GM12878 (cell line): ENCODE measurements at regions of chr6 and their contacts with region 1.

Region 1: GRCh38 chr6:137313928-137314855 is 95.0 kb upstream of the IFNGR1 start:
- DNase-seq: peak; percentile 43
- ATAC-seq: peak; percentile 97
- H3K4me3 ChIP-seq: no peak overlapping the region
- H3K27ac ChIP-seq: no peak overlapping the region
- H3K4me1 ChIP-seq: peaks cover 10% of the 10 kb centered on the region
- H3K27me3 ChIP-seq: no peaks in the 10 kb centered on the region
- CTCF ChIP-seq: peak; percentile 66 to 90 (median 79)
- EP300 ChIP-seq: no peak
- POLR2A ChIP-seq: no peak
- RAD21 ChIP-seq: peak; percentile 99

Region 2: DNA sequence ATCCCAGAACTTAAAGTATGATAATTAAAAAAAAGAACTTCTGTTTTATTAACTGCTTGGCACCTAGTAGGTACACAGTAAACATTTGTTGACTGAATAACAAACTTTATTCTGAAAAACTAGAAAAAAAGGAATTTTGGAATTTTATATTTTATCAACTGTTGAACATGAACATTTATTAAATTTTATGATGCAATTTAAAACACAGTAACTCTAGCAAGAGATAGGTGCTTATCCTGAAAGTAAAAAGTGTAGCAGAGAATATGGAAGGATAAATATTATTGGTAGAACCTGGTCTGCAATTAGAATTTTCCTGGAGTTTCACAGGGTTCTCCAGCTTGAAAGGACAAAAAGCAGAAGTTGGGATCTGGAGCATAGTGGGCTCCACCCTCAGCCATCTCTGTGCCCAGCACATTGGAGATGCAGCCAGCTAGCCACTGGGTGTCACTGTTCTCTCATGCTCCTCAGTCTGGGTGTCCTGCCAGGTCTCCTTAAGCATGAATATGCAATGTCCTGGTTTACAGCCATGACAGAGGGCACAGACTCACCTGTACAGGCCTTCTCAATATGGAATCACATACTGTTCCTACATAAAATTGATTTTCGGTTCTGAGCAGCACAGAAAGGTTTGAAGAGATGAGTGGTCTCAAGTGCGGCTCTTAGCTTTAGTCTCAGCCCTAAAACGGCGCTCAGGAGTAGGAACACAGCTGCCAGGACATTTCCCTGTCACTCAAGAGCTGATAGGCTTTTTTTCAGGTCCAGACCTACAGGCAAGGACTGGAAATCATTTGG is 237.7 kb before region 1 on chr6:
- CTCF ChIA-PET with region 1: interaction called, 53 read pairs
- POLR2A ChIA-PET with region 1: interaction called, 6 read pairs
- RAD21 ChIA-PET with region 1: interaction called, 39 read pairs
- SMC1A ChIA-PET with region 1: interaction called, 43 read pairs
- in situ Hi-C with region 1: no loop called
- intact Hi-C with region 1: loop called (anchors 1 kb)
- DNase-seq: no peak
- ATAC-seq: peak; percentile 100
- H3K4me3 ChIP-seq: no peak overlapping the region
- H3K27ac ChIP-seq: peak overlapping the region; percentile 42
- H3K4me1 ChIP-seq: peaks cover 7% of the 10 kb centered on the region
- H3K27me3 ChIP-seq: no peaks in the 10 kb centered on the region
- CTCF ChIP-seq: peak; percentile 90 to 96 (median 93); a peak in 5 of 6 replicates
- EP300 ChIP-seq: no peak
- POLR2A ChIP-seq: no peak
- RAD21 ChIP-seq: peak; percentile 96

Region 3: DNA sequence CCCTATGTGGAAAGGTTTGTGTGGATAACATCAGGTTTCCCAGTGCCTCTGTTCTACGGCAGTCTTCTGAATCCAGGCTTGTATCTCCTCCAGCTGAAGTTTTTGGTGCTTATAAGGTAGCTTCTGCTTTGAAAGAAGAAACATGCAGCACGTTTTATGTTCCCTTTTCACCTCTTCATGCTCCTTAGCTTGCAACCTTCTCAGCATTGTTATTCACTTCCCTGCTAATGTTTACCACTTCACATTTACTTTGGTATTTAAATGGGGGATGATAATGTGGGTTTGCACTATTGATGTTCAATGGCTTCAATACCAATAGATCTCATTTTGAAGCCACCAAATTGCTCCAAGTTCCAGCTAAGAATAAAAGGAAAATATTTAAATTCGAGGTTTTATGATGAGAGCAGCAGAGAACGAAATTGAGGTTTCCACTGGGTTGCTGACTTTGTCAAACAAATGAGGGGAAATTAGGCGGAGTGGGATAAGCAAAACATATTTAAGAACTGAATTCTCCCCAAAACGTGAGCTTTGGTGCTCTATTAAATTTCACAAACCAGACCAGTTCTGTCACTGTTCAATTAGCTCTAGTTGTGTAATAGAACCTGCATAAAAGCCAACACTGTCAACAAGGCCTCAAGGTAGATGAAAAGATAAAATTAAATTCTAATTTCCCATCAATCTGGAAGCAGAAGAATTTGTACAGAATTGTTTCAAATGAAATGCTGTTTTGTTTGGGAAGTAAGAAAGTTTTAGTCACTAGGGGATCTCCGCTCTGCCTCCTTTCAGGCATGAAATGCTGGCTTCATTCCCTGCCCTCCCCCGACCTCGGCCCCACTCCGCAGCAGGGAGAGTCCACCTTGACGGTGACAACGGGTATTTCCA is 142.1 kb before region 1 on chr6:
- CTCF ChIA-PET with region 1: interaction called, 22 read pairs
- POLR2A ChIA-PET with region 1: no interaction called
- RAD21 ChIA-PET with region 1: interaction called, 21 read pairs
- SMC1A ChIA-PET with region 1: interaction called, 18 read pairs
- in situ Hi-C with region 1: loop called (anchors 5 kb)
- intact Hi-C with region 1: loop called (anchors 5 kb)
- DNase-seq: peak; percentile 68
- ATAC-seq: peak; percentile 86
- H3K4me3 ChIP-seq: 0 out of 2 replicates have a peak overlapping the region, but pooled peaks have one; percentile 1
- H3K27ac ChIP-seq: peak overlapping the region; percentile 84
- H3K4me1 ChIP-seq: peaks cover 51% of the 10 kb centered on the region
- H3K27me3 ChIP-seq: no peaks in the 10 kb centered on the region
- CTCF ChIP-seq: no peak
- EP300 ChIP-seq: peak; percentile 51 to 64; a peak in 1 of 4 replicates
- POLR2A ChIP-seq: 0 out of 2 replicates have a peak, but pooled peaks have one; percentile 31
- RAD21 ChIP-seq: peak; percentile 18; the same call in 1 of the 2 replicates

Region 4: DNA sequence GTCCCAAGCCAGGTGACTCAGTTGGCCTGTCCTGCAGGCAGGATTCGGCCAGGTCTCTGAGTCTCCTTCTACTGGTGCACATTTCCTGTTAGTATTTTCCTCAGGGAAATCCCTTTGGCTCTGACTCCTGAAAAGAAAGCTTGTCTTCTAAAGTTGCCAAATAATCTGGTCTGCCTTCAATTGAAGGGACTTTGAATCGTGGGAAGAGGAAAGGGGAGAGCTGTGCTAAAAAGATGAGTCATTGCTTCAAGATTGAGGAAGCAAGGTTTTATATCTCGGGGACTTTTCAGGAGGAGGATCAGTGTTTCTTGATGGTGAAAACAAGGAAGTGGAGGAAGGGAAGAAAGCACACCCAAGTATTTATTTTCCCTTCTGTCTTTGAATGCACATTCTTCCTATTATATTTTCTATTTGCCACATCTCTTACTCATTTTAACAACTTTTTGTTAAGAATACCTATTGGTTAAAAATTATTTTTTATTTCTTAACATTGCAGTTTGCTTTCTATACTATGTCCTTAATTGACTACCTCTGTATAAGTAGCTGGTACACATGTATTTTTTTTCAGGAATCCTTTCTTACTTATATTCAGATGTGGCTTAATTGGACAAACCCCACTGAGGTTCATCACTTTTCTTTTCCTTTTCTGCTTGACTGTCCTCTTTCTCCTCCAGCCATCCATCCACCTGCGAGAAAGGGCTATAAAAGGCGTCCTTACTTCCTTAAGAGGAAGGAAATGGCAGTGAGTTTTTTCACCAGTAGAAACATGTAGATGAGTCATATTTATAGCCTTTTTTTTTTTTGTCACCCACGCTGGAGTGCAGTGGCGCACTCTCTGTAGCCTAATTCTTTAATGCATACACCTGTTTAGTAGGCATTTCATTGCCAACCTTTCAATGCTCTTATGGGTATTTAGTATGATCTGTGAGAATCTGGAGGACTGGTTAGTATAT is 80.0 kb before region 1 on chr6:
- CTCF ChIA-PET with region 1: interaction called, 4 read pairs
- POLR2A ChIA-PET with region 1: no interaction called
- RAD21 ChIA-PET with region 1: interaction called, 17 read pairs
- SMC1A ChIA-PET with region 1: interaction called, 6 read pairs
- in situ Hi-C with region 1: no loop called
- intact Hi-C with region 1: no loop called
- DNase-seq: no peak
- ATAC-seq: peak; percentile 79
- H3K4me3 ChIP-seq: peak overlapping the region; percentile 28; the same call in 1 of the 2 replicates
- H3K27ac ChIP-seq: peak overlapping the region; percentile 76
- H3K4me1 ChIP-seq: peaks cover 52% of the 10 kb centered on the region
- H3K27me3 ChIP-seq: no peaks in the 10 kb centered on the region
- CTCF ChIP-seq: no peak
- EP300 ChIP-seq: peak in 1 of 2 experiments; percentile 60; a peak in 1 of 4 replicates
- POLR2A ChIP-seq: no peak
- RAD21 ChIP-seq: no peak

Region 5: GRCh38 chr6:137277971-137278637 is 36.1 kb before region 1 on chr6:
- CTCF ChIA-PET with region 1: interaction called, 41 read pairs
- POLR2A ChIA-PET with region 1: interaction called, 5 read pairs
- RAD21 ChIA-PET with region 1: interaction called, 22 read pairs
- SMC1A ChIA-PET with region 1: interaction called, 38 read pairs
- in situ Hi-C with region 1: no loop called
- intact Hi-C with region 1: no loop called
- DNase-seq: no peak
- ATAC-seq: no peak
- H3K4me3 ChIP-seq: no peak overlapping the region
- H3K27ac ChIP-seq: no peak overlapping the region
- H3K4me1 ChIP-seq: peaks cover 9% of the 10 kb centered on the region
- H3K27me3 ChIP-seq: no peaks in the 10 kb centered on the region
- CTCF ChIP-seq: no peak
- EP300 ChIP-seq: no peak
- POLR2A ChIP-seq: no peak
- RAD21 ChIP-seq: no peak

Region 6: GRCh38 chr6:137297887-137298286 is 16.3 kb before region 1 on chr6:
- CTCF ChIA-PET with region 1: interaction called, 12 read pairs
- POLR2A ChIA-PET with region 1: no interaction called
- RAD21 ChIA-PET with region 1: interaction called, 4 read pairs
- SMC1A ChIA-PET with region 1: interaction called, 5 read pairs
- in situ Hi-C with region 1: no loop called
- intact Hi-C with region 1: no loop called
- DNase-seq: no peak
- ATAC-seq: no peak
- H3K4me3 ChIP-seq: no peak overlapping the region
- H3K27ac ChIP-seq: no peak overlapping the region
- H3K4me1 ChIP-seq: no peaks in the 10 kb centered on the region
- H3K27me3 ChIP-seq: no peaks in the 10 kb centered on the region
- CTCF ChIP-seq: no peak
- EP300 ChIP-seq: no peak
- POLR2A ChIP-seq: no peak
- RAD21 ChIP-seq: no peak

Region 7: GRCh38 chr6:137399881-137400443 is 85.8 kb after region 1 on chr6:
- CTCF ChIA-PET with region 1: no interaction called
- POLR2A ChIA-PET with region 1: no interaction called
- RAD21 ChIA-PET with region 1: no interaction called
- SMC1A ChIA-PET with region 1: no interaction called
- in situ Hi-C with region 1: no loop called
- intact Hi-C with region 1: no loop called
- DNase-seq: no peak
- ATAC-seq: peak; percentile 89
- H3K4me3 ChIP-seq: no peak overlapping the region
- H3K27ac ChIP-seq: no peak overlapping the region
- H3K4me1 ChIP-seq: no peaks in the 10 kb centered on the region
- H3K27me3 ChIP-seq: no peaks in the 10 kb centered on the region; a peak in 1 of 4 replicates
- CTCF ChIP-seq: no peak
- EP300 ChIP-seq: peak in 1 of 2 experiments; percentile 28; a peak in 1 of 4 replicates
- POLR2A ChIP-seq: no peak
- RAD21 ChIP-seq: no peak